ENCODE measurements at regions of chr18 and their contacts with region 1.

Region 1: GRCh38 chr18:6752202-6752860 is 22.8 kb downstream of the ARHGAP28 start:
- DNase-seq: peak in 1 of 2 experiments; percentile 84
- H3K4me3 ChIP-seq: peak overlapping the region in 1 of 4 experiments; percentile 39; a peak in 1 of 8 replicates
- H3K27ac ChIP-seq: peak overlapping the region; percentile 64
- H3K4me1 ChIP-seq: peaks cover 0 to 3% (median 2%) of the 10 kb centered on the region in 4 experiments; a peak in 5 of 7 replicates
- H3K27me3 ChIP-seq: no peaks in the 10 kb centered on the region
- CTCF ChIP-seq: no peak
- EP300 ChIP-seq: peak in 1 of 2 experiments; percentile 94; a peak in 1 of 3 replicates
- POLR2A ChIP-seq: peak in 1 of 2 experiments; percentile 48; a peak in 1 of 3 replicates
- RAD21 ChIP-seq: peak; percentile 9 to 26; a peak in 2 of 4 replicates

Region 2: DNA sequence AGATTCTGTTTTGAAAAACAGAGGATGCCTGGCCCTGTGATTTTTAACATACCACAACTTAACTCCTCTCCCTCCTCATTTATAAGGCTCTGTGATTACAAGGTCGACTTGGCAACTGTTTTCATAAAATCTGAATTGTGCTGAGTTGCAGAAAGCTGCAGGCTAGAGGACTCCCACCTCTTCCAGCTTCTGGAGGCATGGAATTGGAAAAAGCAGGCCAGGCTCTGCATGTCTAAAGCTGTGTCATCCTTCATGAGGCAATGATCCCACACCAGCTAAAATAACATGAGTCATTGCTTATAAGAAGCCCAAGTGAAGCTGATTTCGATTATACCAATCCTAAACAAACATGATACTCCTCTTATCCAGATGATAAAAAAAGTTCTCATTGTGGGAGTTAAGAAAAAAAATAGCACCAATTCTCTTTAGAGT is 11.1 kb before region 1 on chr18:
- CTCF ChIA-PET with region 1: interaction called, 8 read pairs
- POLR2A ChIA-PET with region 1: interaction called, 10 read pairs
- DNase-seq: no peak
- H3K4me3 ChIP-seq: no peak overlapping the region
- H3K27ac ChIP-seq: no peak overlapping the region
- H3K4me1 ChIP-seq: peaks cover 0 to 9% (median 3%) of the 10 kb centered on the region in 4 experiments; a peak in 3 of 7 replicates
- H3K27me3 ChIP-seq: no peaks in the 10 kb centered on the region
- CTCF ChIP-seq: no peak
- EP300 ChIP-seq: no peak
- POLR2A ChIP-seq: no peak
- RAD21 ChIP-seq: no peak

Measured in H1 (cell line).